ENCODE measurements at regions of chr1 and their contacts with region 1.

Region 1: DNA sequence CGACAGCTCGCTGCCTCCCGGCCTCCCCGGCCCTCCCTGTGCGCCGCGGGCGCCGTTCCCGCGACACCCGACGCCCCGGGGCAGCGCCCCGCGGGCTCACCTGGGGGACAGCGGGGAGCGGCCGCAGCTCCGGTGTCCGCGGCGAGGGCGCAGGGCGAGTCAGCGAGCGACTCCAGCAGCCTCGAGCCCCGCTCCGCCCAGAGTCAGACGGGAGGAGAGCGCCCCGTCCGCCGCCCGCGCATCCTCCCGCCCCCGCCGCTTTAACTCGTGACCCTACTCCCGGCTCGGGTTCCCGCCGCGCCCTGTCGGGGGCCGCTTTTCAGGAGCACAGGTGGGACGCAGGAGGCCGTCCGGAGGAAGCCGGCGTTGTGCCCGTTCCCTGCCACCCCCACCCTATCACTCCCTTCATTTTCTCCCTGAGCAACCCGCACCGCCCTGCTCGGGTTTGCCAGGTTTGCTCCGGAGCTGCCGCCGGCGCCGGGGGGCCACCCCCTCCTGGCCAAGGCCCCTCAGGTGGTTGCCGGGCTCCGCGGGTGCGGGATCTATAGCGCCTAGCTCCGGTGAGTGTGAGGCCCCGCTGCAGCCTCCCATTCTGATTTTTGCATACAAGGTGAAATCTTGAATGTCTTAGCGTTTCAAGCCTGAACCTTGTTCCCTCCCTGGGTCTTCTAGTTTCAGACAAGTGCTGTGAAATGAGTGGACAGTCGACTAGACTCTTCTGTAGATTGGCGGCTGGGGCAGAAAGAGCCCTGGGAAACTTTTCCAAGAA is at the start of gene MCOLN3:
- DNase-seq: peak; percentile 28
- H3K4me3 Mint-ChIP-seq: peak within 1 kb of the TSS; percentile 83
- H3K27ac Mint-ChIP-seq: no peak within 1 kb of the TSS
- H3K4me1 Mint-ChIP-seq: peaks cover 37% of the 10 kb centered on the region
- H3K27me3 Mint-ChIP-seq: peaks cover 52% of the 10 kb centered on the region
- total RNA-seq, gene MCOLN3: 1.3 and 1.7 TPM in 2 replicates

Region 2: GRCh38 chr1:84930329-84930728 is 118.2 kb before region 1 on chr1:
- intact Hi-C with region 1: no loop called
- DNase-seq: no peak
- H3K4me3 Mint-ChIP-seq: no peak overlapping the region
- H3K27ac Mint-ChIP-seq: no peak overlapping the region
- H3K4me1 Mint-ChIP-seq: peaks cover 22% of the 10 kb centered on the region
- H3K27me3 Mint-ChIP-seq: no peaks in the 10 kb centered on the region

Region 3: GRCh38 chr1:85061711-85062424 is 13.4 kb after region 1 on chr1:
- intact Hi-C with region 1: loop called (anchors 1 kb)
- DNase-seq: peak; percentile 87
- H3K4me3 Mint-ChIP-seq: peak overlapping the region; percentile 85
- H3K27ac Mint-ChIP-seq: peak overlapping the region; percentile 62
- H3K4me1 Mint-ChIP-seq: peaks cover 15% of the 10 kb centered on the region
- H3K27me3 Mint-ChIP-seq: peaks cover 16% of the 10 kb centered on the region